ENCODE measurements at regions of chr13 and their contacts with region 1.

Region 1: DNA sequence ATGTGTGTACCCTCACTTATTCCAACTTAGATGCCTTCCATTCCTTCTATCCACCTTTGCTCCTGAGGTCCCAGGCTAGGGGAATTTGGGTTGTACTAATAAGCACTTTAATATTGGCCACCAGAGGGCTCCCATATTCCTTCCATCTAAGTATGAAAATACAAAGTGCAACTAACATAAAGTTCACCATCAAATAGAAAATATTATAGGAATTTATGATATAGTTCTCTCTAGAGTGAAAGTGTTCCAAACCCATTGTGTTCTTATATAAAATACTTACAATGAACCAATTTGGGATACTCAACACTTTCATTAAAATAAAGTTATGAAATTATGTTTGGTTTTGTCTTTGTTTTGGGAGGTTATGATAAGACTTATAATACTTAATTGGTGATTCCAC is 62.3 kb downstream of the ITGBL1 start:
- DNase-seq: peak; percentile 28
- H3K4me3 Mint-ChIP-seq: no peak overlapping the region
- H3K27ac Mint-ChIP-seq: no peak overlapping the region
- H3K4me1 Mint-ChIP-seq: no peaks in the 10 kb centered on the region
- H3K27me3 Mint-ChIP-seq: no peaks in the 10 kb centered on the region
- CTCF ChIP-seq: no peak

Region 2: DNA sequence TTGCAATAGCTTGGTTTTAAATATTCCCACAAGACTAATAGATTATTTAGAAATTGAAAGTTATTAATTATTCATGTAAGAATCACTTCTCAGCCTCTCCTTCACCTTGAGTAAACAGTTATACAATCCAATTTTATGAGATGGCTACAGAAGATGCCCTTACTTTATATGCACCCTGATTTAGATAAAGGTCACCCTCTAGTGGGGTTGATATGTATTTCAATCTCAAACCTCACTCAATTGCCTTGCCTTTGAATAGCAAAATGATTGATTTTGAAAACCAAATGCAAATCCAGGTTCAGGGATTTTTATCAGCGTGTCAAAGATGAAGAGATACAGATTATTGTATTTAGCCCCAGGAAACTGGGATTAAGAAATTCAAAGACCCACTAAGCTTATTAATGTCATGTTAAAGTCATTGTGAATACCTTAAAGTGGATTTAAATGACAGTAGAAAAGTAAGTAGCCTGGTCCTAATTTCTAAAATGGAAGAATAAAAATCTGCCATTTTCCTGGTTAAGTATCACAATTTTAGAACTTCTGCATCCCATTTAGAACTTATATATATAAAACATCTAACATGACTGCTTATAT is 242.8 kb after region 1 on chr13:
- CTCF ChIA-PET with region 1: no interaction called
- intact Hi-C with region 1: loop called (anchors 1 kb)
- DNase-seq: no peak
- H3K4me3 Mint-ChIP-seq: no peak overlapping the region
- H3K27ac Mint-ChIP-seq: no peak overlapping the region
- H3K4me1 Mint-ChIP-seq: no peaks in the 10 kb centered on the region
- H3K27me3 Mint-ChIP-seq: no peaks in the 10 kb centered on the region
- CTCF ChIP-seq: no peak